T-cell (primary cell): ENCODE measurements at regions of chr2 and their contacts with region 1.

Region 1: DNA sequence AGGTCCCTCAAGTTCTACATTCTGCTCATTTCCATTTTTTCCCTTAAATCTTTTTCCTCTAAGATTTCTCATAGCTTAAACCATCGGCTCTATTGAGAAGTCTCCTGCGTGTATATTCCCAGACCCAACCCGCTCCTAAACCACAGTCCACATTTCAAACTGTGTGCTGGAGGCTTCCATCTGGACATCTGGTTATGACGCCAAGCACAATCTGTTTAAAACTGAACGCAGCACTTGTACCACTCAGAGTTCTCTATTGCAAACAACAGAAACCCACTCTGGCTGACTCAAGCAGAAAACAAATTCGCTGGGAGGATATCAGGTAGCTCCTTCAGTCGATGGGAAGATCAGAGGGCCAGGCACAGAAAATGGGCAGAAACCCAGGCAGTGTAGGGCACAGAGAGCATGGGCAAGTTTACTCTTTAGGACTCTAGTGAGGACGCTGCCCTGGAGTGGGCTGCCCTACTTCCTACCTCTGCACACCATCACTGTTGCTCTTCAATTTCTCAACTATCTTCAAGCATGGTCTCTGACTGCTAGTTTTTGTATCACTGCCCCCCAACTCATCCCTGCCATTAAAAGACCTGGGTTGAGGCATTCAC is 5.6 kb upstream of the EML4 start:
- DNase-seq: no peak
- ATAC-seq: no peak
- H3K4me3 ChIP-seq: no peak overlapping the region
- H3K4me3 Mint-ChIP-seq: no peak overlapping the region
- H3K27ac ChIP-seq: no peak overlapping the region
- H3K27ac Mint-ChIP-seq: no peak overlapping the region
- H3K4me1 ChIP-seq: peaks cover under 1 to 2% of the 10 kb centered on the region in 2 experiments
- H3K4me1 Mint-ChIP-seq: peaks cover 2 to 14% (median 6%) of the 10 kb centered on the region in 3 donors
- H3K27me3 ChIP-seq: no peaks in the 10 kb centered on the region
- H3K27me3 Mint-ChIP-seq: no peaks in the 10 kb centered on the region

Region 2: GRCh38 chr2:42191285-42192009 is 27.9 kb after region 1 on chr2:
- CTCF ChIA-PET with region 1: interaction called in 1 of 2 experiments, 10 read pairs
- POLR2A ChIA-PET with region 1: interaction called in 1 of 2 experiments, 30 read pairs
- DNase-seq: no peak
- ATAC-seq: no peak
- H3K4me3 ChIP-seq: no peak overlapping the region
- H3K4me3 Mint-ChIP-seq: peak overlapping the region; percentile 11 to 36 (median 24)
- H3K27ac ChIP-seq: no peak overlapping the region
- H3K27ac Mint-ChIP-seq: peak overlapping the region; percentile 90
- H3K4me1 ChIP-seq: peaks cover 13 to 37% of the 10 kb centered on the region in 2 experiments
- H3K4me1 Mint-ChIP-seq: peaks cover 74 to 89% (median 84%) of the 10 kb centered on the region in 3 donors
- H3K27me3 ChIP-seq: no peaks in the 10 kb centered on the region
- H3K27me3 Mint-ChIP-seq: no peaks in the 10 kb centered on the region

Region 3: DNA sequence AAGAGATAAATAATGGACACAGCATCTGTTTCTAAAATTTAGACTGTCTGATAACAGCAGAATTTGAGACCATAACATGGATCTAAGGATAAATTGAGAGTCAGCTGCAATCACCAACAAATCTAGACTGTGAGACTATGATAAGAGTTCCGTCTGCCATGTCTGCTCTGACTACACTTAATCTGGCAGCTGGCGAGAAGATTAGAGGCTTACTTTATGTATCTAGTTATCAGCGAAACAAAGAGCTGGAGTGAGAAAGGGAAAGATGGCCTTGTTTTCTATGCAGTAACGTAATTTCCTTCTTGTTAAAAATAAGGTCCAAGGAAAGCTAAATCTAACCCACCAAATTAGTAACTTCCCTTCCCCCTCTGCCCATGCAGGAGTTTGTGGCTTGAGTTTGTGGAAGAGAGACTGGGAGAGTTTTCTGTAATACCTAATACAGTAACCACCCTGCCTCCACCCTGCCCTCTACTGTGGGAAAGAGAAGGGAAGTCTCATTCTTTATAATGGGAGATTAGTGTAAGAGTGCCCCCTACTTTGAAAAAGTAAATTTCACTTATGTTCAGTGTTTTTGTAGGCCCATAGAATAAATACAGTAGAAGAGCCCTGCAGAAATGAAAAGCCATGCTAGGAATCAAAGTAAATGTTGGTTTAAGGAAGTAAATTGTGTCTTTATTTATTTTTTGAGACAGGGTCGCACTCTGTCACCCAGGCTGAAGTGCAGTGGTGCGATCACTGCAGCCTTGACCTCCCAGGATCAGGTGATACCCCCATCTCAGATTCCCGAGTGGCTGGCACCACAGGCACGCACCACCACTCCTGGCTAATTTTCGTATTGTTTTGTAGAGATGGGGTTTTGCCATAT is 33.1 kb after region 1 on chr2:
- CTCF ChIA-PET with region 1: interaction called in 1 of 2 experiments, 10 read pairs
- POLR2A ChIA-PET with region 1: interaction called in 1 of 2 experiments, 30 read pairs
- DNase-seq: peak in 34 of 35 experiments; percentile 4 to 72 (median 36)
- ATAC-seq: peak; percentile 78 to 83 (median 82)
- H3K4me3 ChIP-seq: no peak overlapping the region
- H3K4me3 Mint-ChIP-seq: peak overlapping the region in 1 of 3 donors; percentile 41
- H3K27ac ChIP-seq: peak overlapping the region; percentile 1
- H3K27ac Mint-ChIP-seq: peak overlapping the region; percentile 35 to 65
- H3K4me1 ChIP-seq: peaks cover 24 to 40% of the 10 kb centered on the region in 2 experiments
- H3K4me1 Mint-ChIP-seq: peaks cover 85 to 87% (median 86%) of the 10 kb centered on the region in 3 donors
- H3K27me3 ChIP-seq: no peaks in the 10 kb centered on the region
- H3K27me3 Mint-ChIP-seq: no peaks in the 10 kb centered on the region